Activated CD4-positive, alpha-beta T cell treated with anti-CD3 and anti-CD28 coated beads, Interleukin-2, amount 10 ng/mL, durations not matched to agents 24 days and 14 days (primary cell): ENCODE measurements at regions of chr1 and their contacts with region 1.

Region 1: DNA sequence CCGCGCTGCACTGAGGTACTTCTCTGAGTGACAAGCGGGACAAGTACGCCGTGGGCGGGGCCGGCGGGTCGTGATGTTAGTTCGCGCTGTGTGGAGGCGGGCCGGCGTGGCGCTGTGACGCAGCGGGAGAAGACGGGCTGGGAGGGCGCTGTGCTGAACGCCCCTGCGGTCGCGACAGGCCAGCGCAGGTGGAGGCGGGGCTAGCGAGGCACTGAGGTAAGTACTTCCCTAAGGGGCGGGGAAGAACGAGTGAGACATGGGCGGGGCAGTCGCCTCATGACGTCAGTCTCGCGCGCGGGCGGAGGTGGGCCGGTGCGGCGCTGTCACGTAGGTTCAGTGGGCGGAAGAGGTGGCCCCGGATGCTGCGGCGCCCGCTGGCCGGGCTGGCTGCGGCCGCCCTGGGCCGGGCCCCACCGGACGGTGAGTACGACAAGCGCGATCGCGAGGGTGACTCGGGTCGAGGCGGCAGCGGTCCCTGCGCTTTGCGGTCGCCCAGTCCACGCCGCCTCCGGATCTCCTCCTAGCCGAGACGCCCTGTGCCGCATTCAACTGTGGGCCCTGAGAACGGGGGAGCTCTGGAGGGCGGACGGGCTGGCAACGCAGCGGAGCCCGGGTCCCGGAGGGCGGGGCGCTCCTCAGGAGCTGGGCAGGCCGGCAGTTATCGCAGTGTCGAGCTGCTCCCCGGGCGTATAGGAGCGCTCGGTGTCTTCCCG is at the start of gene GUK1:
- DNase-seq: peak; percentile 100
- H3K4me3 Mint-ChIP-seq: peak within 1 kb of the TSS; percentile 98
- H3K27ac Mint-ChIP-seq: peak within 1 kb of the TSS; percentile 97
- H3K4me1 Mint-ChIP-seq: peaks cover 26% of the 10 kb centered on the region
- H3K27me3 Mint-ChIP-seq: peaks cover 29% of the 10 kb centered on the region
- total RNA-seq, gene GUK1: 211 and 222 TPM in 2 replicates

Region 2: DNA sequence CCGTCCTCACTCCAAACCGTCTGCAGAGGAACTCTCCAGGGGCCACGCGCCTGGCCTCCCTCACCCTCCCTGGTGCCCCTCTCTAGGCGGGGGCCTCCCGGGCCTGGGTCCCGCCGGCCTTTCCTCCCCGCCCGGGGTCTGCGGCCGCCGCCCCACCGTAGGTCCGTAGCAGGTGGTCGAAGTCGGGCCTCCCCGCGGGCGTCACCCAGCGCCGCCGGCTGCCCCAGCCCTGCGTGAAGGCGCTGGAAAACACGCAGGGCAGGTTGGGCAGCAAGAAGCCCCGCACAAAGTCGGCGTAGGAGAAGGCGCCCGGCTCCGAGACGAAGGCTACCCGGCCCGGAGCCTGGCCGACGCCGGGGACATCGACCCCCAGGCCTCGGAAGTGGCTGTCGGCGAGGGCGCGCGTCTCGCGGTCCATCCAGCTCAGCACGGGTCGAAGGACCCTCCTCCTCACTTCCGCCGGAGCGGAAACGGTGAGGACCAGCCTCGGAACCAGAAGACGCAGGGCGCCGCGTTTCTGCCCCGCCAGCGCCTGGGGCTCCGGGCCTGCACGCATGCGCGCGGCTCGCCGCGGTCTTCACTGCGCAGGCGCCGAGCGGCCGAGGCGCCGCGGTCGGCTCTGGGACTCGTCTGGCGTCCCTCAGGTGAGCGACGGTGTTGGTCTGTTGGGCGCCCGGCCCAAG is 405.1 kb before region 1 on chr1 and contains the starts of genes JMJD4 and SNAP47:
- intact Hi-C with region 1: loop called (anchors 1 kb)
- DNase-seq: peak; percentile 99
- H3K4me3 Mint-ChIP-seq: peak within 1 kb of the TSS; percentile 98
- H3K27ac Mint-ChIP-seq: peak within 1 kb of the TSS; percentile 93
- H3K4me1 Mint-ChIP-seq: peaks cover 26% of the 10 kb centered on the region
- H3K27me3 Mint-ChIP-seq: peaks cover 2% of the 10 kb centered on the region
- total RNA-seq, gene JMJD4: 34.8 and 35.1 TPM in 2 replicates
- total RNA-seq, gene SNAP47: 28.6 and 30.9 TPM in 2 replicates

Region 3: DNA sequence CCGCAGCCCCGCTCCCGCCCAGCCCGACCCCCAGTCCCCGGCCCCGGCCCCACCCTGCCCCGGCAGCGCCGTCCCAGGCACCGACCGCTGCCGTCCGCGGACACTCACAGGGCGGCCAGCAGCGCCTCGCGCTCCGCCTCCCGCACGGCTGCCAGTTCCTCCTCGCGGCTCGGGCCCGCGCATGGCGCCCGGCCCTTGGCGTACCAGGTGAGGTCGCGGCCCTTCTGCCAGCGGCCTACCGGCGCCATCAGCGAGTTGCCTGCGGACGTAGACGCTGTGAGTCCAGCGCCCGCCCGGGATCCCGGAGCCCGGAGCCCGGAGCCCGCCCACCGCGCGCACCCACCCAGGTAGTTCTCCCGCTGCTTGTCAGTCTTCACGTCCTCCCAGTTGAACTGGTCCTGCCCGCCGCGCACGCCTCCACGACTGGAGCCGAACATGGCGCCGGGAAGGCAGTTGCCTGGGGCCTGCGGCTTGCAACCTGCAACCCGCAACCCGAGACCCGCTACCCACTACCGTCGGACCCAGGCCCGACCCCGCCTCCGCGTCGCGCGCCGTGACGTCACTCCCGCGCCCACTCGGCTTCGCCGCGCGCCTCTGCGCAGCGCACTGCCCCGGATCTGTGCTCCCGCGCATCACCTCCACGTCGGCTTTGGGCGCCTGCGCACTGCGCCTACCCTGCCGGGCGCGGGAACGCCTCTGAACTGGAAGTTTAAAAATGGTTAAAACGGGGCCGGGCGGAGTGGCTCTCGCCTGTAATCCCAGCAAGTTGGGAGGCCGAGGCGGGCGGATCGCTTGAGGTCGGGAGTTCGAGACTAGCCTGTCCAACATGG is 37.1 kb before region 1 on chr1 and contains the start of gene C1orf35:
- intact Hi-C with region 1: loop called (anchors 1 kb)
- DNase-seq: peak; percentile 99
- H3K4me3 Mint-ChIP-seq: peak within 1 kb of the TSS; percentile 93
- H3K27ac Mint-ChIP-seq: peak within 1 kb of the TSS; percentile 97
- H3K4me1 Mint-ChIP-seq: peaks cover 24% of the 10 kb centered on the region
- H3K27me3 Mint-ChIP-seq: peaks cover 2% of the 10 kb centered on the region
- total RNA-seq, gene C1orf35: 27.5 and 33.0 TPM in 2 replicates

Region 4: GRCh38 chr1:228156901-228157728 is 17.0 kb after region 1 on chr1:
- intact Hi-C with region 1: no loop called
- DNase-seq: no peak
- H3K4me3 Mint-ChIP-seq: no peak overlapping the region
- H3K27ac Mint-ChIP-seq: no peak overlapping the region
- H3K4me1 Mint-ChIP-seq: peaks cover 12% of the 10 kb centered on the region
- H3K27me3 Mint-ChIP-seq: no peaks in the 10 kb centered on the region

Region 5: DNA sequence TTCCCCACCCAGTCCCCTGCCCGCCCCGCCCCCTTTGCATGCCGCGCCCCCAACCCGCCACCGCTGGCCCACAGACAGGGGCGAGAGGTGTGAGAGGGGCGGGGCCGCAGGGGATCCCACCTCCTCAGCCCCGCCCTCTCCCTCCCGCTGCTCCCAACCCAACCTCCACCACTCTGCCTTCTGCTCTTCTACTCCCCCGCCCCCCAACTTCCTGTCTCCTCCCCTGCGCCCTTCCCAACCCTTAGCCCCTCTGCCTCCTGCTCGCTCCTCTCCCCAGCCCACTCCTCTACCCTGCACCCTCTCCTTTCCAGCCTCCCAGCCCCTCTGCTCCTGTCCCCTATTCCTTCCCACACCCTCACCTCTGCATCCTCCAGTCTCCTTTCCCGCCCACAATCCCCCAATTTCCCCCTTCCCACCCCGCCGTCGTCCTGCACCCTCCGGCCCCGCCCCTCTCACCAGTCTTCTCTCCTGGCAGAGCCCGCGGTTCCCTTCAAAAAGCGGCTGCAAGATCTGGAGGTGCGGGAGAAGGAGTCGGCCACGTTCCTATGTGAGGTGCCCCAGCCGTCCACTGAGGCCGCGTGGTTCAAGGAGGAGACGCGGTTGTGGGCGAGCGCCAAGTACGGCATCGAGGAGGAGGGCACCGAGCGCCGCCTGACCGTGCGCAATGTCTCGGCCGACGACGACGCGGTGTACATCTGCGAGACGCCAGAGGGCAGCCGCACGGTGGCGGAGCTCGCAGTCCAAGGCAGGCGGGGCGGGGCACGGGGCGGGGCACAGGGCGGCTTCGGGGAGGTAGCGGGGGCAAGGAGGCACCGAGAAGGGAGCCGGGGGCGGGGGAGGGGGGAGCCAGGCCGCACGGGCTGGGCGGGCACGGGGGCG is 73.1 kb after region 1 on chr1:
- intact Hi-C with region 1: loop called (anchors 1 kb)
- DNase-seq: peak; percentile 95
- H3K4me3 Mint-ChIP-seq: peak overlapping the region; percentile 95
- H3K27ac Mint-ChIP-seq: peak overlapping the region; percentile 91
- H3K4me1 Mint-ChIP-seq: peaks cover 7% of the 10 kb centered on the region
- H3K27me3 Mint-ChIP-seq: no peaks in the 10 kb centered on the region

Region 6: DNA sequence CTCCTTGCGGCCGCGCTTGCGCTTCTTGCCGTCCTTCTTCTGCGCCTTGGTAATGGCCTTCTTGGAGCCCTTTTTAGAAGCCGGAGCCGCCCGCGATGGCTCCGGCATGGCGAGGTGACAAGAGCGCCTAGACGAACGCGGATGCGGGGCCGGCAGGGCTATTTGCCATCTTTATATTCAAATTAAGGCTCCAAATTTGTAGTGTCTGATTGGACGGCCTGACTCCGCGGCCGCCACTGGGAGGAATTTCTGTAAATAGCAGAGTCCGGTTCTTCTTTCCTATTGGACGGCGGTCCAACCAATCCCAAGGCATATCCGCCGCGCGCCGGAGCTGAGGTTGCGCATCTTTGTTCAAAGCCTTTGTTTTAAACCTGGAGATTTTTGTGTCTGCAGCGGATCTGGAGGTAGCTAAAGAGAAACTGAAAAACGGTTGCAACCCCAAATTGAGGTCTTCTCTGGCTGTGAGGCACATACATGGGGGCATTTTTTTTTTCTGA is 324.4 kb after region 1 on chr1:
- intact Hi-C with region 1: loop called (anchors 2 kb)
- DNase-seq: peak; percentile 97
- H3K4me3 Mint-ChIP-seq: peak overlapping the region; percentile 87
- H3K27ac Mint-ChIP-seq: peak overlapping the region; percentile 88
- H3K4me1 Mint-ChIP-seq: peaks cover 50% of the 10 kb centered on the region
- H3K27me3 Mint-ChIP-seq: peaks cover 12% of the 10 kb centered on the region